HepG2 (cell line): ENCODE measurements at regions of chr20 and their contacts with region 1.

Region 1: DNA sequence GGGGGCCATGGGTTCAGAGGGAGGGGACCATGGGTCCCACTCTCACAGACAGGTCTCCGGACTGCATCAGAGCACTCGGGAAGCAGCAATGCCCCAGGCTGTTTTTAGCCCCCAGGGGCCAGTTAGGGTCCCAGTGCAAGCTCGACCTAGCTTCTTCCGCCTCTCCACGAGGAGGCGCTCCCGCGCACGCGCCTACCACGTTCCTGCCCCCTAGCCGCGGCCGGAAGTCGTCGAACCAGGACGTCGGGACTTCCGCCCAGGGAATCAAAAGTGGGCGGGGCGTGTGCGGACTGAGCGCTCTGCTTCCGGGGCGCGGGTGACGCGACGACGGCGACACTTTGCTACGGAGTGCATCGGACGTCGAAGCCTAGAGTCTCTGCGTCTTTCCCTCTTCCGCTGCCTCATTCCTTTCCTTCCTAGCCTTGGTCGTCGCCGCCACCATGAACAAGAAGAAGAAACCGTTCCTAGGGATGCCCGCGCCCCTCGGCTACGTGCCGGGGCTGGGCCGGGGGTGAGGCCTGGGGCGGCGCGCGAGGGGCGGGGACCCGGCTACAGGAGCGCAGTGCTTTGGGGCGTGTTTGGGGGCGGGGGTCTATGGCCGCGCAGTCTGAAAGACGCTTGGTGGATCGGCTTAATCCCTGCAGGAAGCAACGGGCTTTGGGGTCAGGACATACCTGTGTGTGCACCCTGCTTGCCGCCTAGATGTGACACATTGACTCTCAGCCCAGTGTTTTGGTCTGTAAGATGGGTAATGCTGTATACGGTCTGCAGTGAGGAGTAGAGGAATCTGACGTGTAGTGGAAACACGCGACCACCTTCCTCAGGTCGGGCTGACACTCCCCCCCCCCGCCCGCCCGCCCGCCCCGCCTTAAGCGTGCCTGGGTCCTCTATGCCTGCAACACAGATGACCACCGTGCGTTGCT is at the start of gene PRPF6:
- DNase-seq: peak; percentile 97
- ATAC-seq: peak; percentile 73
- H3K4me3 ChIP-seq: peak within 1 kb of the TSS; percentile 95 to 99 (median 97)
- H3K27ac ChIP-seq: peak within 1 kb of the TSS; percentile 81
- H3K4me1 ChIP-seq: peaks cover 42% of the 10 kb centered on the region
- H3K27me3 ChIP-seq: no peaks in the 10 kb centered on the region; a peak in 1 of 5 replicates
- CTCF ChIP-seq: peak; percentile 100
- EP300 ChIP-seq: peak in 1 of 2 experiments; percentile 40; a peak in 1 of 4 replicates
- POLR2A ChIP-seq: peak in 1 of 2 experiments; percentile 95; a peak in 2 of 4 replicates
- RAD21 ChIP-seq: peak; percentile 94
- total RNA-seq, gene PRPF6: 101 and 127 TPM in 2 replicates

Region 2: GRCh38 chr20:63739130-63740069 is 241.7 kb before region 1 on chr20 and contains the start of gene SLC2A4RG:
- CTCF ChIA-PET with region 1: no interaction called
- POLR2A ChIA-PET with region 1: interaction called, 11 read pairs
- in situ Hi-C with region 1: no loop called
- intact Hi-C with region 1: no loop called
- DNase-seq: peak; percentile 94
- ATAC-seq: peak; percentile 15
- H3K4me3 ChIP-seq: peak within 1 kb of the TSS; percentile 74 to 93 (median 85)
- H3K27ac ChIP-seq: peak within 1 kb of the TSS; percentile 93
- H3K4me1 ChIP-seq: peaks cover 64% of the 10 kb centered on the region
- H3K27me3 ChIP-seq: no peaks in the 10 kb centered on the region
- CTCF ChIP-seq: peak; percentile 54
- EP300 ChIP-seq: peak; percentile 36 to 77; a peak in 3 of 4 replicates
- POLR2A ChIP-seq: peak in 1 of 2 experiments; percentile 54; a peak in 2 of 4 replicates
- RAD21 ChIP-seq: peak; percentile 76
- total RNA-seq, gene SLC2A4RG: 47.4 and 91.4 TPM in 2 replicates

Region 3: DNA sequence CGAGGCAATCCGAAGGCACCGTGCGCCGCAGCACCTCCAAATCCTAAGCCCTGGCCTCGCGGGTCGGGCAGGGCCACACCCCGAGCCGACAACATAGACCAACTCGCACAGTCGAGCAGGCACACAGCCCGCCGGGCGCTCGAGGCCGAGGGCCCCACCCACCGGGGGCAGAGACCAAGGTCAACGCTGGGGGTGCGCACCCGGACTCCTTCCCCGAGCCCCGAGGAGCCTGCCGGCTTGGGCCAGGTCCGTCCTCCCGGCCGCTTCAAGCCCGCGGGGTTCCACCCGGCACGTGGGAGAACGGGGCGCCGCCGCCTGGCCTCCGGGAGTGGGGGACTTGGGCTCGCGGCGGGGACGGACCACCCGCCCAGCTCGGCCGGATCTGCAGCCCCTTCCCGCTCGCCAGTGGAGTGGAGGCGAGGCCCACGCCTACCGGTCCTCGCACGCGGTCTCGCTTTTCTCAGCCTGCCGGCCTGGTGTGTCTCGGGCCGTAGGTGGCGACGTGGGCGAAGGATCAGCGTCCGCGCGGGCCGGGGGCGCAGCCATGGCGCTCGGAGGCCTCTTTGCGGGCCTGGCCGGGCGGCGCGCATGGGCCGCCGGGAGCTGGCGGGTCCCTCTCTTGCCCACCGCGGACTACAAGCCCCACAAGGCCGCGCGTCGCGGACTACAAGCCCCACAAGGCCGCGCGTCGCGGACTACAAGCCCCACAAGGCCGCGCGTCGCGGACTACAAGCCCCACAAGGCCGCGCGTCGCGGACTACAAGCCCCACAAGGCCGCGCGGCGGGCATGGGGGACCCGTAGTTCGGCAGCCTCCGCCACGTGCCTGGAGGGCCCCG is 25.0 kb before region 1 on chr20 and contains the start of gene UCKL1:
- CTCF ChIA-PET with region 1: no interaction called
- POLR2A ChIA-PET with region 1: interaction called, 75 read pairs
- in situ Hi-C with region 1: no loop called
- intact Hi-C with region 1: no loop called
- DNase-seq: peak; percentile 91
- ATAC-seq: peak; percentile 80
- H3K4me3 ChIP-seq: peak within 1 kb of the TSS; percentile 92 to 100 (median 99)
- H3K27ac ChIP-seq: peak within 1 kb of the TSS; percentile 99
- H3K4me1 ChIP-seq: peaks cover 66% of the 10 kb centered on the region
- H3K27me3 ChIP-seq: no peaks in the 10 kb centered on the region
- CTCF ChIP-seq: peak; percentile 19; the same call in 1 of the 2 replicates
- EP300 ChIP-seq: peak in 1 of 2 experiments; percentile 79; a peak in 3 of 4 replicates
- POLR2A ChIP-seq: peak in 1 of 2 experiments; percentile 96; a peak in 2 of 4 replicates
- RAD21 ChIP-seq: peak; percentile 77
- total RNA-seq, gene UCKL1: 48.0 and 50.2 TPM in 2 replicates

Region 4: GRCh38 chr20:64038565-64039292 is 57.7 kb after region 1 on chr20:
- CTCF ChIA-PET with region 1: no interaction called
- POLR2A ChIA-PET with region 1: interaction called, 41 read pairs
- in situ Hi-C with region 1: no loop called
- intact Hi-C with region 1: loop called (anchors 1 kb)
- DNase-seq: no peak
- ATAC-seq: no peak
- H3K4me3 ChIP-seq: no peak overlapping the region
- H3K27ac ChIP-seq: peak overlapping the region; percentile 45
- H3K4me1 ChIP-seq: peaks cover 71% of the 10 kb centered on the region
- H3K27me3 ChIP-seq: no peaks in the 10 kb centered on the region
- CTCF ChIP-seq: peak; percentile 27; the same call in 1 of the 2 replicates
- EP300 ChIP-seq: no peak
- POLR2A ChIP-seq: no peak
- RAD21 ChIP-seq: no peak

Region 5: DNA sequence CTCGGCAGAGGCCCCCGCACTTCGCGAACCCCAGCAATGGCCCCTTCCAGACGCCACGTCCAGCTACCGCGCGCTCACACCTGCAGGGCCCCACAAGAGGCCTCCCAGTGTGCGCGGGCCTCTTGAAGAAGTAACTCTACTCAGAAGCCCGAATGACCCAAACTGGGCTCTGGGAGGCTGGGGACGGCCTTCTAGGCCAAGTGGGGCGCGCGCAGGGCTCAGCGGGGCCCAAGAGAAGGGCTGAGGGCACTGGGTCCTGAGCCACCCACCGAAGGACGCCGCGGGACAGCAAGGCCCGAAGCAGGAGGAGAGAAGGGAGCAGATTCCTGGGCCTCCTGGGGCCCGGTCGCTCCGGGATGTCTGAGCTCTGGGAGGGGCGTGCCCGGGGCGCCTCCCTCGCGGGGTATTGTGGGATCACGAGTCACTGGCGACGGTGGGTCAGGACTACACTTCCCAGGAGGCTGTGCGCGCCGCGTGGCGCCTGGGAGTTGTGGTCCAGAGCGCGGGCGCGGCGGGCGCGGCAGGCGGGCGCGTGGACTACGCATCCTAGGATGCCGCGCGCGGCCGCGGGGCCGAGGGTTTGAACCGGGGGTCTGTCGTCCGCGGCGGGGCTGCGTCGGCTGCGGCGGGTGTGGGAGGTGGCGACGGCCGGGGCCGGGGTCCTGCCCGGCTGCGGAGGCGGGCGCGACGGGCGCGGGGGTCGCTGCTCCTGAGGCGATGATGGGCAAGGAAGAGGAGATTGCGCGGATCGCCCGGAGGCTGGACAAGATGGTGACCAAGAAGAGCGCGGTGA is 81.7 kb after region 1 on chr20 and contains the start of gene TCEA2:
- CTCF ChIA-PET with region 1: interaction called, 33 read pairs
- POLR2A ChIA-PET with region 1: interaction called, 23 read pairs
- in situ Hi-C with region 1: loop called (anchors 5 kb)
- intact Hi-C with region 1: loop called (anchors 1 kb)
- DNase-seq: peak; percentile 96
- ATAC-seq: peak; percentile 76
- H3K4me3 ChIP-seq: peak within 1 kb of the TSS; percentile 82 to 98 (median 90)
- H3K27ac ChIP-seq: peak within 1 kb of the TSS; percentile 78
- H3K4me1 ChIP-seq: peaks cover 65% of the 10 kb centered on the region
- H3K27me3 ChIP-seq: peaks cover 0 to 3% of the 10 kb centered on the region in 2 experiments; a peak in 2 of 5 replicates
- CTCF ChIP-seq: peak; percentile 32; the same call in 1 of the 2 replicates
- EP300 ChIP-seq: peak in 1 of 2 experiments; percentile 10; a peak in 1 of 4 replicates
- POLR2A ChIP-seq: peak in 1 of 2 experiments; percentile 81; a peak in 2 of 4 replicates
- RAD21 ChIP-seq: peak; percentile 40; the same call in 1 of the 2 replicates
- total RNA-seq, gene TCEA2: 25.9 and 33.7 TPM in 2 replicates